ENCODE measurements at regions of chr14 and their contacts with region 1.

Region 1: DNA sequence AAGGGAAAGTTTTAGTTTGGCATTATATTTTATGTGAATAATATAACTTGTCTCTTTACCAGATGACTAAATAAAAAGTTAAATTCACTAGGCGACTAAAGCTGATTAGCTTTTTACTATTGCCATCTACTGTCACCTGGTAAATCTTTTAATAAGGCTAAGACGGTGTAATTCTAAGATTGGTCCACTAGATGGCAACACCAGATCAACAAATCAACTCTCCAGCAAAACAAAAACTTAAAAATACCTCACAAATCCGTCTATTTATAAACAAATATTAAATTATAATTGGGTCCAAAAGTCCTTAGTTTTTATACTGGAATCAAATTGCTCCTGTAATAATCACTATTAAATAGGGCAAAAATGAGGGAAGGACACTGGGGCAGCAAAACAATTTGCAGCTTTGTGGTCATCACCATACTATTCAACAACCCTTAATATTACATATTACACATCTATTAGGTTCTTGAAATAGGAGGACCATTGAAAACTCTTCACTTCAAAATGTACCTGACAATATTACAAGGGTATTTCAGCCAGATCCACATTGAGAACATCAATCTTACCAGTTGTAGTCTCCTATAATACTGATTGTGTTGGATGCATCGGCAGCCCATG is 47.9 kb downstream of the GALC start:
- DNase-seq: peak; percentile 68
- ATAC-seq: peak; percentile 88
- H3K4me3 ChIP-seq: no peak overlapping the region
- H3K27ac ChIP-seq: no peak overlapping the region
- H3K4me1 ChIP-seq: no peaks in the 10 kb centered on the region
- H3K27me3 ChIP-seq: no peaks in the 10 kb centered on the region
- CTCF ChIP-seq: peak; percentile 69
- POLR2A ChIP-seq: no peak
- RAD21 ChIP-seq: peak; percentile 64

Region 2: GRCh38 chr14:87813686-87814085 is 131.4 kb before region 1 on chr14:
- CTCF ChIA-PET with region 1: no interaction called
- POLR2A ChIA-PET with region 1: no interaction called
- dilution Hi-C with region 1: no loop called
- in situ Hi-C with region 1: no loop called
- intact Hi-C with region 1: no loop called
- DNase-seq: no peak
- ATAC-seq: no peak
- H3K4me3 ChIP-seq: no peak overlapping the region
- H3K27ac ChIP-seq: no peak overlapping the region
- H3K4me1 ChIP-seq: no peaks in the 10 kb centered on the region
- H3K27me3 ChIP-seq: no peaks in the 10 kb centered on the region
- CTCF ChIP-seq: no peak
- POLR2A ChIP-seq: no peak
- RAD21 ChIP-seq: no peak

Region 3: GRCh38 chr14:87877877-87878276 is 67.2 kb before region 1 on chr14:
- CTCF ChIA-PET with region 1: no interaction called
- POLR2A ChIA-PET with region 1: no interaction called
- dilution Hi-C with region 1: no loop called
- in situ Hi-C with region 1: no loop called
- intact Hi-C with region 1: no loop called
- DNase-seq: no peak
- ATAC-seq: no peak
- H3K4me3 ChIP-seq: no peak overlapping the region
- H3K27ac ChIP-seq: no peak overlapping the region
- H3K4me1 ChIP-seq: no peaks in the 10 kb centered on the region
- H3K27me3 ChIP-seq: no peaks in the 10 kb centered on the region
- CTCF ChIP-seq: no peak
- POLR2A ChIP-seq: no peak
- RAD21 ChIP-seq: no peak

Region 4: GRCh38 chr14:88168498-88169165 is 223.5 kb after region 1 on chr14:
- CTCF ChIA-PET with region 1: interaction called, 18 read pairs
- POLR2A ChIA-PET with region 1: no interaction called
- dilution Hi-C with region 1: no loop called
- in situ Hi-C with region 1: loop called (anchors 10 kb)
- intact Hi-C with region 1: loop called (anchors 1 kb)
- DNase-seq: peak; percentile 16
- ATAC-seq: peak; percentile 84
- H3K4me3 ChIP-seq: no peak overlapping the region
- H3K27ac ChIP-seq: no peak overlapping the region
- H3K4me1 ChIP-seq: no peaks in the 10 kb centered on the region
- H3K27me3 ChIP-seq: no peaks in the 10 kb centered on the region
- CTCF ChIP-seq: peak; percentile 54
- POLR2A ChIP-seq: no peak
- RAD21 ChIP-seq: peak; percentile 50

Region 5: GRCh38 chr14:88189417-88190191 is 244.5 kb after region 1 on chr14:
- CTCF ChIA-PET with region 1: interaction called, 3 read pairs
- POLR2A ChIA-PET with region 1: no interaction called
- dilution Hi-C with region 1: no loop called
- in situ Hi-C with region 1: no loop called
- intact Hi-C with region 1: loop called (anchors 5 kb)
- DNase-seq: peak; percentile 87
- ATAC-seq: peak; percentile 98
- H3K4me3 ChIP-seq: peak overlapping the region; percentile 33
- H3K27ac ChIP-seq: no peak overlapping the region
- H3K4me1 ChIP-seq: peaks cover 4% of the 10 kb centered on the region; the same call in 1 of the 2 replicates
- H3K27me3 ChIP-seq: peaks cover 4% of the 10 kb centered on the region
- CTCF ChIP-seq: peak; percentile 76
- POLR2A ChIP-seq: no peak
- RAD21 ChIP-seq: peak; percentile 75

Region 6: GRCh38 chr14:88385345-88386101 is 440.4 kb after region 1 on chr14 and contains the start of gene SPATA7:
- CTCF ChIA-PET with region 1: no interaction called
- POLR2A ChIA-PET with region 1: no interaction called
- dilution Hi-C with region 1: no loop called
- in situ Hi-C with region 1: loop called (anchors 10 kb)
- intact Hi-C with region 1: loop called (anchors 2 kb)
- DNase-seq: peak; percentile 89
- ATAC-seq: peak; percentile 98
- H3K4me3 ChIP-seq: peak within 1 kb of the TSS; percentile 82
- H3K27ac ChIP-seq: peak within 1 kb of the TSS; percentile 95
- H3K4me1 ChIP-seq: no peaks in the 10 kb centered on the region; the same call in 1 of the 2 replicates
- H3K27me3 ChIP-seq: no peaks in the 10 kb centered on the region
- CTCF ChIP-seq: no peak
- POLR2A ChIP-seq: peak; percentile 51
- RAD21 ChIP-seq: no peak
- total RNA-seq, gene SPATA7: 10.0 and 12.8 TPM in 2 replicates

Region 7: GRCh38 chr14:88562831-88563686 is 618.0 kb after region 1 on chr14 and contains the start of gene ZC3H14:
- CTCF ChIA-PET with region 1: no interaction called
- POLR2A ChIA-PET with region 1: no interaction called
- dilution Hi-C with region 1: no loop called
- in situ Hi-C with region 1: no loop called
- intact Hi-C with region 1: loop called (anchors 5 kb)
- DNase-seq: peak; percentile 80
- ATAC-seq: peak; percentile 95
- H3K4me3 ChIP-seq: peak within 1 kb of the TSS; percentile 98
- H3K27ac ChIP-seq: peak within 1 kb of the TSS; percentile 94
- H3K4me1 ChIP-seq: peaks cover 6% of the 10 kb centered on the region; the same call in 1 of the 2 replicates
- H3K27me3 ChIP-seq: no peaks in the 10 kb centered on the region
- CTCF ChIP-seq: no peak
- POLR2A ChIP-seq: peak; percentile 61; the same call in 1 of the 2 replicates
- RAD21 ChIP-seq: no peak
- total RNA-seq, gene ZC3H14: 103 and 111 TPM in 2 replicates

Measured in IMR-90 (cell line).